ENCODE measurements at regions of chr21 and their contacts with region 1.

Region 1: GRCh38 chr21:46323227-46324128 is at the start of gene C21orf58:
- DNase-seq: peak; percentile 98 to 99
- ATAC-seq: peak; percentile 93 to 95 (median 94)
- H3K4me3 ChIP-seq: peak within 1 kb of the TSS; percentile 77
- H3K27ac ChIP-seq: peak within 1 kb of the TSS; percentile 94
- H3K4me1 ChIP-seq: peaks cover 24% of the 10 kb centered on the region
- H3K27me3 ChIP-seq: no peaks in the 10 kb centered on the region
- CTCF ChIP-seq: no peak
- total RNA-seq, gene C21orf58: 0.49 to 3.0 (median 1.1) TPM

Region 2: DNA sequence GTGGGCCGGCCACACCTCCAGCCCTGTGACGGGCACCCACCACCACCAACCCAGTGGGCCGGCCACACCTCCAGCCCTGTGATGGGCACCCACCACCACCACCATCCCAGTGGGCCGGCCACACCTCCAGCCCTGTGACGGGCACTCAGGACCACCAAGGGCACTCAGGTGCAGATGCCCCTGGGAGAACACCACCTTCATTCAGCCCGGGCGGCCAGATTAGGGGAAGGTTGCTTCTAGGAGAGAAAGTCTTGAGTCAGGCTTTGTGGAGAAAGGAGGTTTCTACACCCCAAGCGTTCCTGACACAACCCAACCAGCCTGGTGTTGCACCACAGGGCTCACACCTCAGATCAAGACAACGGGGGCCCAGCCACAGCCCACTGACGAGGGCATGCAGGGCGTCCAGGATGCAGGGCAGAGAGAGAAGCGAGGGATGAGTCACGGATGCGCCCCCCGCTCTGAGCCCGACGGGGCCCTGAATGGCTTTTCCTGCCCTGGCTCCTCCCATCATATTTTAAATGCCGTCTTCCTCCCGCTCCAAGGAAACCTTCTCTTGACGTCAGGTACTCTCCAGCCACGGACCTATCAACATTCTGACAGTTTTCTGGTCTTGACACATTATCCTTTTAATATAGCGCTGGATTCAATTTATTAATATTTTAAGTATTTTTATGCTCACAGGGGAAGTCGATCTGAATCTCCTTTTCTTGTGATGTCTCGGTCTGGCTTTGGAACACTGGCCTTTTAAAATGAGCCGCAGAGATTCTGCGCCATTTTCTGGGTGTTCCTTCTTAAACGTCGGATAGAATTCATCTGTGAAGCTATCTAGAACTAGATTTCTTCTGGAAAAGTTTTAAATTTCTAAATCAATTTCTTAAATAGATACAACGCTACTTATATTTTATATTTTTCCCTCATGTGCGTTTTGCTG is 138.6 kb before region 1 on chr21:
- intact Hi-C with region 1: loop called in 1 of 2 experiments (anchors 10 kb)
- DNase-seq: peak; percentile 86 to 89
- ATAC-seq: peak; percentile 64 to 72 (median 66)
- H3K4me3 ChIP-seq: peak overlapping the region; percentile 74
- H3K27ac ChIP-seq: peak overlapping the region; percentile 80
- H3K4me1 ChIP-seq: peaks cover 20% of the 10 kb centered on the region
- H3K27me3 ChIP-seq: peaks cover 0 to 1% (median 0%) of the 10 kb centered on the region in 3 donors
- CTCF ChIP-seq: no peak